Esophagus muscularis mucosa (tissue), 4 donors: ENCODE measurements at regions of chr7 and their contacts with region 1.

Region 1: DNA sequence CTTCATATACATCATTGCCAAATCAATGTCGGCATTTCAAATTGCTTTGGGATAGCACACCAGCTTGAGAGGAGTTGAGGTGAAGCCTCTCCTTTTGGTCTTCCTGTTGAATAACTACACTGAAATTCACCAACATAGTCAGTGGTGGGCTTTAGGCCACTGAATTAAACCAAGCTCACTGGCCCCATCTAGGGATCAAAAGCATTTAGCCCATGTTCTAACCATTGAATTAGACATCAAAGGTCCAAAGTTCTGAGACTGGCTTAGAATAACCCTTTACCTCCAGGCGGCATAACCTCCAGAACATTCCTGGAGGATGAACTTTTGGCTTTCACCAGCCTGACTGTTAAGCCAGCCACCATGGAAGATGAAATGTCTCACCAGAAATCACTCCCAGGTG is 54.6 kb downstream of the BPGM start:
- DNase-seq: no peak
- H3K4me3 ChIP-seq: no peak overlapping the region
- H3K27ac ChIP-seq: peak overlapping the region; percentile 82 to 90 (median 89)
- H3K4me1 ChIP-seq: peaks cover 4 to 71% (median 64%) of the 10 kb centered on the region in 4 donors
- H3K27me3 ChIP-seq: no peaks in the 10 kb centered on the region
- CTCF ChIP-seq: peak in 1 of 3 experiments; percentile 12
- EP300 ChIP-seq: no peak
- POLR2A ChIP-seq: no peak

Region 2: GRCh38 chr7:134750083-134751062 is 49.1 kb after region 1 on chr7:
- intact Hi-C with region 1: loop called (anchors 5 kb)
- DNase-seq: no peak
- H3K4me3 ChIP-seq: no peak overlapping the region
- H3K27ac ChIP-seq: no peak overlapping the region
- H3K4me1 ChIP-seq: peaks cover 2 to 48% (median 39%) of the 10 kb centered on the region in 4 donors
- H3K27me3 ChIP-seq: no peaks in the 10 kb centered on the region
- CTCF ChIP-seq: peak; percentile 49 to 66 (median 63)
- EP300 ChIP-seq: no peak
- POLR2A ChIP-seq: no peak

Region 3: DNA sequence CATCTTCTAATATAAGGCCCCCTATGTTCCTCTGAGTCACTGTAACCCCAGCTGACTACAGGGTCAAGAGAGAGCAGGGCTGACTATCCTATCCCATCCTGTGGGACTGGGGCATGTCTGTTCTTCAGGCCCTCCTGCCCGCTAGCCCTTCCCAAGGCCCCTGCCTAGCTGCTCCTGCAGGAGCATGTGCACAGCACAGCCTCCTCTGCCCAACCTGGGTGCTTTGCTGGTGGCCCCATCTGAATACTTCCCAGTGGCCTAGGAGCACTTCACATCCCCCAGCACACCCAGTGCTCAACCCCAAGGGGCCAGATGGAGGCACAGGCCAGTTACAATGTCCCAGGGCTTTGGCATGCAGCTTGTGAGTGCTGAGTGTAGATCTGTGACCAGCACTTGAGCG is 322.4 kb after region 1 on chr7:
- intact Hi-C with region 1: no loop called
- DNase-seq: no peak
- H3K4me3 ChIP-seq: no peak overlapping the region
- H3K27ac ChIP-seq: no peak overlapping the region
- H3K4me1 ChIP-seq: no peaks in the 10 kb centered on the region
- H3K27me3 ChIP-seq: no peaks in the 10 kb centered on the region
- CTCF ChIP-seq: no peak
- EP300 ChIP-seq: no peak
- POLR2A ChIP-seq: no peak